Activated CD8-positive, alpha-beta T cell treated with anti-CD3 and anti-CD28 coated beads for 36 hours (primary cell): ENCODE measurements at regions of chr15 and their contacts with region 1.

Region 1: GRCh38 chr15:38707802-38708671 is 143.4 kb upstream of the RASGRP1 start:
- DNase-seq: peak; percentile 52
- ATAC-seq: peak; percentile 91
- H3K4me3 Mint-ChIP-seq: no peak overlapping the region
- H3K27ac Mint-ChIP-seq: no peak overlapping the region
- H3K4me1 Mint-ChIP-seq: peaks cover 10% of the 10 kb centered on the region
- H3K27me3 Mint-ChIP-seq: peaks cover 6% of the 10 kb centered on the region
- CTCF ChIP-seq: peak; percentile 92

Region 2: DNA sequence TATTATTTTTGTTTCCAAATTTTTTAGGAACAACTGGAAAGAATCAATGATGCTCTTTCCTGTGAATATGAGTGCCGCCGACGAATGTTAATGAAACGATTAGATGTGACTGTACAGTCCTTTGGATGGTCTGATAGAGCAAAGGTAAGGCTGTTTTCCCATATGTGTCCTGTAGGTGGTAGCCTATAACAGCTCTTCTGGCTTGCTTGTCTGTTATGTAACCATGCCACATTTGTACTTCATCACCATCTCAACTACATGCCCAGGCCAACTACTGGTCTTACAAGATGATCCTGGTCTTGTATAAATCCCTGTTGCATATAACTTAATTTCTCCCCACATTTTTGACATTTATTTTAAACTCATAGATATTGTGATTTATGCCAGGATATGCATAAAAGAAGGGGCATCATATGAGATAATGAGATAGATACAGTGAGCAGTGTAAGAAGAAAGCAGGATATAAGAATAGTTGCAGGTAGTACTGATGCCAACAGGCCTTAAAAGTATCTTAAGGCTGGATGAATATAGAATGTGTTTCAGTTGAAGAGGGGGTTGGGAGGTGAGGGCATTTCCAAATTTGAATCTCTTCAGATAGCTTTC is 233.8 kb before region 1 on chr15:
- CTCF ChIA-PET with region 1: interaction called, 12 read pairs
- POLR2A ChIA-PET with region 1: no interaction called
- intact Hi-C with region 1: no loop called
- DNase-seq: peak; percentile 24
- ATAC-seq: peak; percentile 97
- H3K4me3 Mint-ChIP-seq: no peak overlapping the region
- H3K27ac Mint-ChIP-seq: no peak overlapping the region
- H3K4me1 Mint-ChIP-seq: peaks cover 2% of the 10 kb centered on the region
- H3K27me3 Mint-ChIP-seq: no peaks in the 10 kb centered on the region
- CTCF ChIP-seq: peak; percentile 79

Region 3: GRCh38 chr15:38724827-38725226 is 16.8 kb after region 1 on chr15:
- CTCF ChIA-PET with region 1: interaction called, 13 read pairs
- POLR2A ChIA-PET with region 1: no interaction called
- intact Hi-C with region 1: no loop called
- DNase-seq: no peak
- ATAC-seq: no peak
- H3K4me3 Mint-ChIP-seq: no peak overlapping the region
- H3K27ac Mint-ChIP-seq: no peak overlapping the region
- H3K4me1 Mint-ChIP-seq: no peaks in the 10 kb centered on the region
- H3K27me3 Mint-ChIP-seq: no peaks in the 10 kb centered on the region
- CTCF ChIP-seq: no peak

Region 4: GRCh38 chr15:38817427-38818156 is 109.6 kb after region 1 on chr15:
- CTCF ChIA-PET with region 1: interaction called, 15 read pairs
- POLR2A ChIA-PET with region 1: no interaction called
- intact Hi-C with region 1: no loop called
- DNase-seq: peak; percentile 92
- ATAC-seq: peak; percentile 99
- H3K4me3 Mint-ChIP-seq: no peak overlapping the region
- H3K27ac Mint-ChIP-seq: no peak overlapping the region
- H3K4me1 Mint-ChIP-seq: peaks cover 5% of the 10 kb centered on the region
- H3K27me3 Mint-ChIP-seq: peaks cover 2% of the 10 kb centered on the region
- CTCF ChIP-seq: peak; percentile 98

Region 5: DNA sequence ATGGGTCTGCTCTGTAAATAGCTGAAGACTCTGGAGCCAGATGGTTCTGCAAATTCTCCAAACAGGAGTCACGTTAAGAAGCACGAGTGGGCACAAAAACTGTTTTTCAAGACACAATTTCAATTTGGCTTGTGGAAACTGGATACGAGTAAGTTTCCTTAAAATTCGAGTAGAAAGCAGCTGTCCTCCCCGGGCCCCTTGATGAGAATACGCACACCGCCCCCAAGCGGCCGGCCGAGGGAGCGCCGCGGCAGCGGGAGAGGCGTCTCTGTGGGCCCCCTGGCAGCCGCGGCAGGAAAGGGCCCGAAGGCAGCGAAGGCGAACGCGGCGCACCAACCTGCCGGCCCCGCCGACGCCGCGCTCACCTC is 872.1 kb after region 1 on chr15:
- CTCF ChIA-PET with region 1: interaction called, 12 read pairs
- POLR2A ChIA-PET with region 1: no interaction called
- intact Hi-C with region 1: no loop called
- DNase-seq: peak; percentile 94
- ATAC-seq: peak; percentile 92
- H3K4me3 Mint-ChIP-seq: peak overlapping the region; percentile 66
- H3K27ac Mint-ChIP-seq: no peak overlapping the region
- H3K4me1 Mint-ChIP-seq: peaks cover 11% of the 10 kb centered on the region
- H3K27me3 Mint-ChIP-seq: peaks cover 48% of the 10 kb centered on the region
- CTCF ChIP-seq: peak; percentile 99